ENCODE measurements at regions of chr11 and their contacts with region 1.

Region 1: DNA sequence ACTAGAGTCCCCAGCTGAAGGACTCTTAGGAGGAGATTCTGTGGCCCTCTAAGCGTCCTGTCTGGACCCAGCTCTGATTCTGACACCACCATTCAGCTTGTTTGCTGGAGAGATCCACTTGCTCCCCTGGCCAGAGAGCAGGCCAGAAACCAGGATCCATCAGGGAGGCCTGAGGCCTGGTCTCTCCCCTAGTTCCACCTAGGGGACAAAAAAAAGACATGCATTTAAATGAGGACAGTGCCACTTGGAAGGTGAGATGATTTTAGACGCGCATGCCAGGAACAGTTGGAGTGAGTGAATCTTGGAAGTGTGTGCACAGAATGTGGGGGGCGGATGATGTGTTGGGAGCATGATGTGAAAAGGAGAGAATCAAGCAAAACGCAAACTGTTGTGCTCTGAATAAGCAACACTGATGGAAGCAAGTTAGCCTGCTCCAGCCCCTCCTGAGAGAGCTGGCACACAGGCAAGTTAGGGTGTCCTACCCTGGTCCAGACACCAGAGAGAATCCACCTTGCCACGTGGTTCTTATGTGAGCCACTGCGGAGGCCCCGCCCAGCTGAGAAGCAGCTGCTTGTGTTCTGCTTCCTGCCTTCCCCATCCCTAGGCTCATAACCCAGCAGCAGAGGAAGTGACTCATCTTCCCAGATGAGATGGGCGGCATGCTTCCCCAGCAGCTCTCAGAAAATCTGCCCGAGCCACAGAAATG is 8.0 kb upstream of the SLCO2B1 start:
- H3K4me3 Mint-ChIP-seq: peak overlapping the region; percentile 44
- H3K27ac Mint-ChIP-seq: peak overlapping the region; percentile 83
- H3K4me1 Mint-ChIP-seq: peaks cover 70% of the 10 kb centered on the region
- H3K27me3 Mint-ChIP-seq: peaks cover 14% of the 10 kb centered on the region

Region 2: DNA sequence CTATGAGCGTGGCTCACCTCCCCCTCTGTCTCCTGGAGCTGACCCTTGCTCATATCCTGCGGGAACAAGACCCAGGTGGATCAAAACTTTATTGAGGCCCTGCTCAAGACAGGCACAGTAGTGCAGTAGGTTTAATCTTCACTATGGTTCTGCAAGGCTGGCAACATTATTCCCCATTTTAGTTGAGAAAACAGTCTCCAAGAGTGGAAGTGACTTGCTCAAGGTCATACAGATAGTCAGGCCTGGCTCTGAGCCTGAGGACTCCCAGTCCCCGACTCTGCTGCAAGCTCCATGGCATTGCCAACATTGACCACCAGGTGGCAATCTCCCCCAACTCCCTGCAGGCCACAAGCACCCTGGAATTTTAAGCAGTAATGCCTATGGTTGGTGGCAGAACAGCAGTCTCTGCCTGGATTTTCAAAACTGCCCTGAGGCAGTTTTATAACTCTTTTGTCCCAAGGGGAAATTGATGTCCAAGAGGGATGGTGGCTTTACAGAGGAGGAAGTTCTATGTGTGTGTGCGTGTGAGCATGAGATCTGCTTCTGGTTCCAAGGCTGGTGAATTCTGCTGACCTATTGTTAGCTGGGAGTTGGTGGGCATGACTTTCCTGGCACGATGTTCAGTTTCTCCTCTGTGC is 120.0 kb before region 1 on chr11:
- intact Hi-C with region 1: loop called (anchors 5 kb)
- H3K4me3 Mint-ChIP-seq: no peak overlapping the region
- H3K27ac Mint-ChIP-seq: no peak overlapping the region
- H3K4me1 Mint-ChIP-seq: no peaks in the 10 kb centered on the region
- H3K27me3 Mint-ChIP-seq: no peaks in the 10 kb centered on the region

Region 3: DNA sequence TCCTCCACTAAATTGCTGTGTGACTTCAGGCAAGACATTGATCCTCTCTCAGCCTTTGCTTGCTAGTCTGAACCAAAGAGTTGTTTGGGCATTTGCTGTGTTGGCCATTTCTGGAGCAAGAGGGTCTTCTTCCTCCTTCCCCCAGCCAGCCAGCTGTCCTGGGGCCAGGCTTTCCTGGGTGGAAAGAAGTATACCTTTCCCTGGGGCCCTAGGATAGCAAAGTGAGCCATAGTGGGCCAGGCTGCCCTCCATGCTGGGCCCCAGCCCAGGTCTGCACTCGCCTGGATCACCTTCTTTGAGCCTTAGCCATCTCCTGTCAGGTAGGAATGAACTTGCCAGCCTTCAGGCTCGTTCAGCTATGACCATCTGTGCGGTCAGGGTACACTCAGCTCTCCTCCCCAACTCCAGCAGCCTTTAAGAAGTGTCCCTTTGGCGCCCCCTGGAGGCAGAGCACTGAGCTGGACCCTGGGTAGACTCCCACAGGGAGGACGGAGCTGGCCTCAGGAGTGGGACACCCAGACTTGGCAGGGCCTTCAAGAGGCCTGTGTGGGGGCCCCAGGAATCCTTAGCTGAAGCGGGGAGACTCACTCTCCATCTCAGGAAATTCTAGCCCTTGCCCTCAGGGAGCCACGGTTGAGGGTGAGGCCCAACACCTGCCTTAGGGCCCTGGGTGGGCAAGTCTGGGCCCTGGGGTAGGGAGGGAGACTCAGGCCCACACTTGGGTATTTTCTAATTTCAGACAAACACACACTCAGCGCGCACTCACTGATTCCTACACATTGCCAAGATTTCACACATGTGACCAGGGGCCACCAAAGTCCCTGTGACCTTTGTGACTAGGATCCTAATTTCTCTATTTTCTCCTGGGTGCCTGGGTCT is 62.1 kb after region 1 on chr11:
- intact Hi-C with region 1: loop called (anchors 1 kb)
- H3K4me3 Mint-ChIP-seq: no peak overlapping the region
- H3K27ac Mint-ChIP-seq: peak overlapping the region; percentile 77
- H3K4me1 Mint-ChIP-seq: peaks cover 67% of the 10 kb centered on the region
- H3K27me3 Mint-ChIP-seq: peaks cover 9% of the 10 kb centered on the region

Region 4: GRCh38 chr11:75241036-75241905 is 98.4 kb after region 1 on chr11:
- intact Hi-C with region 1: loop called (anchors 2 kb)
- H3K4me3 Mint-ChIP-seq: peak overlapping the region; percentile 51
- H3K27ac Mint-ChIP-seq: no peak overlapping the region
- H3K4me1 Mint-ChIP-seq: peaks cover 15% of the 10 kb centered on the region
- H3K27me3 Mint-ChIP-seq: peaks cover 79% of the 10 kb centered on the region

Region 5: DNA sequence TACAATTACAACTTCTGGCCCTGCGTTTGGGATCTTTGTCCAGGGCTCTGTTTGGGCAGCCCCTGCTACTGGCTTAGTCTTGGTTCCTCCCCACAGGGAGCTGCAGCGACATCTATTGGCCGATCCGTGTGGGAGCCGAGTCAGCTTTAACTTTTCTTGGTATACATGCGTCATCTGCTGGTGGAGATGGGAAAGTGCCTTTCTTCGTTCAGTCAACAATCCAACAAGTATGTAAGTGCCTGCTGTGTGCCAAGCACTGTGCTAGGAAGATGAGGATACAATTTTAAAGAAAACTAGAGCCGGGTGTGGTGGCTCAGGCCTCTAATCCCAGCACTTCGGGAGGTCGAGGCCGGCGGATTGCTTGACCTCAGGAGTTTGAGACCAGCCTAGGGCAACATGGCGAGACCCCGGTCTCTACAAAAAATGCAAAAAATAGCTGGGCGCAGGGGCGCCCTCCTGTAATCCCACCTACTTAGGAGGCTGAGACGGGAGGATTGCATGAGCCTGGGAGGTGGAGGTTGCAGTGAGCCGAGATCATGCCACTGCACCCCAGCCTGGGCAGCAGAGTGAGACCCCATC is 105.9 kb after region 1 on chr11:
- intact Hi-C with region 1: loop called (anchors 1 kb)
- H3K4me3 Mint-ChIP-seq: no peak overlapping the region
- H3K27ac Mint-ChIP-seq: no peak overlapping the region
- H3K4me1 Mint-ChIP-seq: no peaks in the 10 kb centered on the region
- H3K27me3 Mint-ChIP-seq: peaks cover 56% of the 10 kb centered on the region